Calu3 (cell line): ENCODE measurements at regions of chr10 and their contacts with region 1.

Region 1: DNA sequence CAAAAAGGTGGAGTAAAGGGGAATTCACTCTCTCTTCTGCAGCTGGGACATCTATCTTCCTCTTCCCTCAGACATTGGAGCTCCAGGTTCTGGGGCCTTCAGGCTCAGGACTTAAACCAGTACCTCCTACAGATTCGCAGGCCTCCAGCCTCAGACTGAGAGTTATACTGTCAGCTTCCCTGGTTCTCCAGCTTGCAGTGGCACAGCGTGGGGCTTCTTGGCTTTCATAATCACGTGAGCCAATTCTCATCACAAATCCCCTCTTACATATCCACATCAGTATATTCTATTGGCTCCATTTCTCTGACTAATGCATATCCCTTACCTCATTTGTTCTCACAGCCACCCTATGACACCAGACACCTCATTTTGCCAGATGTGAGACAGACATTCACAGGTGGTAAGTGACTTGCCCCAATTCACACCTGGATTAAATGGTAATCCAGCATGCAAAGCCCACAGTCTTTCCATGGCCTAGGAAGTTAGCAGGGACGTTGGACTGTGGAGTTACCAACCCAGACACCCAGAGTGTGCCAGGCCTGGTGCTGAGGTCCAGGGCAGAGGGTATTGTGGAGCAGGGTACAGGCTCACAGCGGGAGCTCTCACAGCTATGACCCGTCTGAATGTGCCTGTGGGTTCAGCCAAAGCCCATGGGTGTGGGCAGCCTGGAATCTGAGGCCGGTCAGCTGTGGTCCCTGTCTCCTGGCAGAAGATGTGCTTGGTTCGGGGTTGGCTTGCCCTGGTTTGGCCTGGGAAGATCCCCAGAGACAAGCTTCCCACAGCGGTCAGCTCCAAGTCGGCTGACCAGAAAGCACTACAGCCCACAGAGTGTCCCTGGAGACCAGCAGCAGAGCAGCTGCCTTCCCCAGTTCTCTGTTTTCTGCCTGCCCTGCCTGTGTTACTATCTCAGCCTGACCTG is 18.4 kb upstream of the ZCCHC24 start:
- DNase-seq: no peak
- H3K4me3 Mint-ChIP-seq: no peak overlapping the region
- H3K27ac Mint-ChIP-seq: no peak overlapping the region
- H3K4me1 Mint-ChIP-seq: no peaks in the 10 kb centered on the region
- H3K27me3 Mint-ChIP-seq: peaks cover 17% of the 10 kb centered on the region
- CTCF ChIP-seq: no peak

Region 2: DNA sequence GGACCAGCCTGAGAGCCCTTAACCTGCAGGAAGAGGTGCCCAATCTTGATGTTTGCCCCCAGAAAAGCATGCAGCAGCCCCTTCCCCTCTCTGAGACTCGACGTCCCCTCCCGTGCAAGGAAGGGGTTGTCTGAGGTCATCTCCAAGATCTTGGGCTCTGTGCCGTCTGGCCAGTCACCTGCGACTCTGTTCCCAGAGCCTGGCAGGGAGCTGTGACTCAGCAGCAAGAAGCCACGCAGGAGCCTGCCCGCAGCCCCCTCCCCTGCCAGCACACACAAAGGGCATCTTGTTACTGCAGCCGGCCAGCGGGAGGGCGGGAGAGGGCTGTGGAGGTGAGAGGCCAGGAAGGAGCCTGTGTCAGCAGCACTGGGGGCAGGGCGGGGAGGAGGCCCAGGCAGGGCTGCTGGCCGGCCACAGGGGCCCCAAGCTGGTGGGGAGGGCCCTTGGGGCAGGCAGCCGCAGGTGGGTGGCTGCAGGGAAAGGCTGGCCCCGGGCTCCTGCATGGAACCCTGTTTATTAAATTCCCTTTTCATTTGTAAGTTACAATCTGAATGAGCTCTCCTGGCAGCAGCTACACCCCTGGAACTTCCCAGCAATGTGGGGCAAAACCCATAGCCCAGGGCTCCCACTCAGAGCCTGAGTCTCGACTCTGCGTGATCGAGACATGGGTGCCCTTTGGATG is 498.7 kb before region 1 on chr10:
- CTCF ChIA-PET with region 1: no interaction called
- intact Hi-C with region 1: no loop called
- DNase-seq: peak; percentile 97
- H3K4me3 Mint-ChIP-seq: peak overlapping the region; percentile 35
- H3K27ac Mint-ChIP-seq: peak overlapping the region; percentile 91
- H3K4me1 Mint-ChIP-seq: peaks cover 82% of the 10 kb centered on the region
- H3K27me3 Mint-ChIP-seq: no peaks in the 10 kb centered on the region
- CTCF ChIP-seq: no peak

Region 3: DNA sequence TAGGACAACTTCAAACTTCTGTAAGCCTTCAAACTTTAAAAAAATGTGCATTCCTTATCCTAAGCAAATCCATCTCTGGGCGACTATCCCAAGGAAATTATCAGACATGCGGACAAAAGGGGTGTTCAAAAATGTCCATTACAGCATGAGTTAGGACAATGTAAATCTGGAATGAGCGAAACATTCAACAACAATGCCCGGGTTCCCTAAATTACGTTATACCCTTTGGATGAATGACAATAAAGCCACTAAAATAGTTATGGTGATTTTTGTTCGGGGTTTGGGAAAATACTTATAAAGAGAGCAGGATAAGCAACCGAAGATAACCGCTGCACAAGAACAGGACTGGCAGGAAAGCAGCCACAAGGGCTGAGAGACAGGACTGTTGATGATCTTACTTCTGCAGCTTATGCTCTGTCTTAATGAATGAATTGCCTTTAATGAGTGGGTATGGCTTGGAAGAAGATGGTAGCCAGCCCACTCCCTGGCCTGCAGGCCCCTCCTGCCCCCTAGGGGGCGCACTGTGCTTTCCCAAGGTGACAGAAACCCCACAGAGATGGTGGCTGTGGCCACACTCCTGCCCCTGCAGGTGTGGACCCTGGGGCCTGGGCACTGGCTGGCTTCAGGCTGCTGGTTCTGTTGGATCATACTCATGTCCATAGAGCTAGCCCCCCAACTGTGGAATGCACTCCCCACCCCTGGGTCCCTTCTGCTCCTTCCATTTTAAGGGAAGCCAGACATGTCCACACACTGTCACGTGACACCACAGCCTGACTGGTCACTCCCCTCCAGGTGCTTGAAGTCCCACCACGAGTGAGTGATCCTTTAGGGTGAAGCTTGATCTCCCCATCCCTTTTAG is 63.5 kb before region 1 on chr10:
- CTCF ChIA-PET with region 1: no interaction called
- intact Hi-C with region 1: loop called (anchors 5 kb)
- DNase-seq: peak; percentile 70
- H3K4me3 Mint-ChIP-seq: no peak overlapping the region
- H3K27ac Mint-ChIP-seq: no peak overlapping the region
- H3K4me1 Mint-ChIP-seq: peaks cover 15% of the 10 kb centered on the region
- H3K27me3 Mint-ChIP-seq: peaks cover 38% of the 10 kb centered on the region
- CTCF ChIP-seq: peak; percentile 67

Region 4: GRCh38 chr10:79477456-79477855 is 13.6 kb after region 1 on chr10:
- CTCF ChIA-PET with region 1: interaction called, 11 read pairs
- intact Hi-C with region 1: no loop called
- DNase-seq: no peak
- H3K4me3 Mint-ChIP-seq: no peak overlapping the region
- H3K27ac Mint-ChIP-seq: no peak overlapping the region
- H3K4me1 Mint-ChIP-seq: no peaks in the 10 kb centered on the region
- H3K27me3 Mint-ChIP-seq: peaks cover 57% of the 10 kb centered on the region
- CTCF ChIP-seq: no peak